Psoas muscle (tissue), 8 donors: ENCODE measurements at regions of chr2 and their contacts with region 1.

Region 1: DNA sequence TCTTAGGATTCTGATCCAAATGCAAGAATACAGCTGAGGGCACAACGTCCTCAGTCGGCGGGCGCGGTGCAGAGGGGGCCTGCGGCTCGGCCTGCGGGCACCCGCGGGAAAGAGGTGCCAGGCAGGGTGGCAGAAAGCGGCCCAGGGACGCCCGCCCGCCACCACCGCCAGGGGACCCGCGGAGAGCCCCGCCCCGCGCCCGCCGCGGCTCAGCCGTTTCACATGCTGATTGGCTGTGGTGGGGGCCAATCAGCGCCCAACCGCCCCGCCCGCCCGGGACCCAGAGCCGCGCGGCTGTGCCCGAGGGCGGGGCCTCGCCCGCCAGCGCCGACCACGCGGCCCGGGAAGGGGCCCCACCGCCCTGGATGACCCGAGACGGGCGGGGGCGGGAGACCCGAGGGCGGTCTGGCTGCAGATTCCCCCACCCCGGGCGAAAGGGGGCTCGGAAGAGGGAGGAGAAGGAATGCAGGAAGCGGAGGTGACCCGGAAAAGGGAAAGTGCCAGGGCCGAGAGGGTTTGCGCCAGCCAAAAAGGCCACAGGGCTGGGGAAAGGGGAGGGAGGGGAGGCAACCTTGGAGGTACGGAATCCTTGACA is 8.0 kb downstream of the IRS1 start:
- DNase-seq: peak; percentile 95 to 96
- ATAC-seq: peak; percentile 89 to 95 (median 92)
- H3K4me3 ChIP-seq: peak overlapping the region; percentile 89
- H3K27ac ChIP-seq: peak overlapping the region; percentile 99
- H3K4me1 ChIP-seq: peaks cover 81% of the 10 kb centered on the region
- H3K27me3 ChIP-seq: no peaks in the 10 kb centered on the region
- CTCF ChIP-seq: peak; percentile 45

Region 2: GRCh38 chr2:226151132-226151531 is 640.5 kb before region 1 on chr2:
- intact Hi-C with region 1: loop called in 1 of 2 experiments (anchors 10 kb)
- DNase-seq: no peak
- ATAC-seq: peak; percentile 83 to 98 (median 92)
- H3K4me3 ChIP-seq: peak overlapping the region; percentile 37
- H3K27ac ChIP-seq: peak overlapping the region; percentile 77
- H3K4me1 ChIP-seq: peaks cover 10% of the 10 kb centered on the region
- H3K27me3 ChIP-seq: no peaks in the 10 kb centered on the region
- CTCF ChIP-seq: no peak

Region 3: GRCh38 chr2:226320076-226320948 is 471.3 kb before region 1 on chr2:
- intact Hi-C with region 1: loop called in 1 of 2 experiments (anchors 2 kb)
- DNase-seq: peak; percentile 27 to 70
- ATAC-seq: peak; percentile 93 to 97 (median 96)
- H3K4me3 ChIP-seq: peak overlapping the region; percentile 45
- H3K27ac ChIP-seq: peak overlapping the region; percentile 84
- H3K4me1 ChIP-seq: peaks cover 10% of the 10 kb centered on the region
- H3K27me3 ChIP-seq: no peaks in the 10 kb centered on the region
- CTCF ChIP-seq: peak; percentile 54

Region 4: GRCh38 chr2:226447338-226448295 is 344.0 kb before region 1 on chr2:
- intact Hi-C with region 1: loop called in 1 of 2 experiments (anchors 10 kb)
- DNase-seq: no peak
- ATAC-seq: peak; percentile 70 to 87 (median 79)
- H3K4me3 ChIP-seq: no peak overlapping the region
- H3K27ac ChIP-seq: peak overlapping the region; percentile 62
- H3K4me1 ChIP-seq: peaks cover 14% of the 10 kb centered on the region
- H3K27me3 ChIP-seq: no peaks in the 10 kb centered on the region
- CTCF ChIP-seq: no peak

Region 5: DNA sequence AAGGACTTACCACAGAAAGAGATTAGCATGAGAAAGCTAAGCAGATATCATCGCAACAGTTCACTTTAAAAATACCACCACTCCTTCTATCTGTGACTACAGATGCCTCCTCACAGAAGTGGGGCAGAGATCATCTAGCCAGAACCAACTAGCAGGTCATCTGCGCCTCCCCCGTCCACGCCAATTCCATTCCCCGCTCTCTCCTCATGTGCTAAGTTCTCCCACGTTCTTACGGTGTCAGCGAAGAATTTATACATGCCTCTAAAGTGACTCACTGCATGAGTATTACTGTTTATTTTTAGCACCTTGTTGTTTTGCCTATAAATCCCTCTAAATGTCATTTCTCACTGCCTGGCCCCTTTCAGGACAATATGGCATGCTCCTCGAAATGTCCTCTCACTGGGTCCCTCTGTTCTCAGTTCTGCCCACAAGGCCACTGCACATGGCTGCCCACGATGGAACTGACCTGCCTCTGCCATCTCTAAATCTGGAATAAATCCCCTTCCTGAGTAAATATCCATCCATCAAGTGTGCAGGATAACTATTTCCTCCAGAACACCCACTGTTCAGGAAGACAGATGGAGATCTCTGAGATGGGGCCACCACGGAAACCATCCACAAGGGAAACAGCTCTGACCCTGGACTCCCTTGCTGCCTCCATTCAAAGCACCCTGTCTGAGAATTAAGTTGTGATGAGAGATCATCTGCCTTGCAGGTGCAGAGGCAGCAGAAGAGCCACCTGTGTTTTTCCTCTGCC is 129.6 kb before region 1 on chr2:
- intact Hi-C with region 1: loop called (anchors 2 to 10 kb)
- DNase-seq: peak; percentile 52 to 80
- ATAC-seq: peak; percentile 84 to 92 (median 89)
- H3K4me3 ChIP-seq: peak overlapping the region; percentile 30
- H3K27ac ChIP-seq: peak overlapping the region; percentile 89
- H3K4me1 ChIP-seq: peaks cover 22% of the 10 kb centered on the region
- H3K27me3 ChIP-seq: no peaks in the 10 kb centered on the region
- CTCF ChIP-seq: no peak

Region 6: DNA sequence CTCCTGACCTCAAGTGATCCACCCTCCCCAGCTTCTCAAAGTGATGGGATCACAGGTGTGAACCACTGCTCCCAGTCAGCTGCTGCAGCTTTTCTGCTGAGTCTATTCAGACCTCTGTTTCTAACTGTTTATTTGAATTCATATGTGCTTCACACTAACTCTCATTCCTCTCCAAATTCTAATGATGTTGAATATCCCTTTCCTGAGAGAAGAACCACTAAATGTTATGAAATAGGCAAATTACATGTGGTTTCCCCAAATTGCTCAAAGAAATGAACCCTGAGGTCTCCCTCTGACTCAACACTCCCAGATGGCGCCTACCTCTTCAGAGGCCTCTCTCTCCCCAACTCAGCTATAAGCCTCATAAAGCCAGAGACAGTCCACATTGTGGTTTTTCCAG is 90.5 kb before region 1 on chr2:
- intact Hi-C with region 1: no loop called
- DNase-seq: no peak
- ATAC-seq: no peak
- H3K4me3 ChIP-seq: no peak overlapping the region
- H3K27ac ChIP-seq: no peak overlapping the region
- H3K4me1 ChIP-seq: no peaks in the 10 kb centered on the region
- H3K27me3 ChIP-seq: no peaks in the 10 kb centered on the region
- CTCF ChIP-seq: no peak

Region 7: GRCh38 chr2:226756129-226756528 is 35.5 kb before region 1 on chr2:
- intact Hi-C with region 1: loop called in 1 of 2 experiments (anchors 5 kb)
- DNase-seq: no peak
- ATAC-seq: peak; percentile 22 to 36 (median 32)
- H3K4me3 ChIP-seq: no peak overlapping the region
- H3K27ac ChIP-seq: peak overlapping the region; percentile 91
- H3K4me1 ChIP-seq: peaks cover 59% of the 10 kb centered on the region
- H3K27me3 ChIP-seq: no peaks in the 10 kb centered on the region
- CTCF ChIP-seq: no peak

Region 8: DNA sequence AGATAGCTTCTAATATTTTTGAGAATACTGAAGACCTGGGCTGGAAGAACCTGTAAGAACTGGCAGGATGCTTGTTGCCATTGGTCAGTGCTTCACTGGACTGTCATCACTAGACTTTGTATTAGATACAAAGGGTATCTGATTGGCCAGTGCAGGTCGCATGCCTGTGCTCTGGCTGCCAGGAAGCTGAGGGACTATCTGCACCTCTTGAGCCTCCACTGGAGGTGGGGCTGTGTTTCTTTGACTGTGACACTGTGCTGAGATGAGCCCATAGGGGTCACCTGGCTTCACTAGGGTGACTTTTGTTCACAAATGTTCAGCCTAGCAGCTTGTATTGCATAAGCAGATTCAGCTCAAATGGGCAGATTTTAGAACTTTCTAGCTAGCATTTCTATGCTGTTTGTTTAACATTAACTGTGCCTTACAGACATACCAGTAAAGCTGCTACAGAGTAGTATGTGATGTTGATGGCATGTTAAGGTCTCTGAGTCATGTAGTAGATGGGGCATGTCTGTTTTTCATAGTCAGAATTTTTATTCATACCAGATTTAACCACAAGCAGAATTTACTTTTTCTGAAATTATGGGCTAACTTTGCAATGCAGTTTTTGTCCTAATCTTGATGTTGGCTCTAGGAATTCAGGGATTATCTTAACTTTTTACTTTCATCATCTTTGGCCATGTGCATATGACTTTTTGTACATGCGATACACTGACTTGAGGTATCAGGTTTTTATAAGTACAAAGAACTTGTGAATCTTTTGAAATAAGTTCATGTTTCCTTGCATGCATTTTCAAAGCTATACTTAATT is 100.4 kb after region 1 on chr2:
- intact Hi-C with region 1: no loop called
- DNase-seq: no peak
- ATAC-seq: no peak
- H3K4me3 ChIP-seq: no peak overlapping the region
- H3K27ac ChIP-seq: no peak overlapping the region
- H3K4me1 ChIP-seq: no peaks in the 10 kb centered on the region
- H3K27me3 ChIP-seq: no peaks in the 10 kb centered on the region
- CTCF ChIP-seq: no peak